ENCODE measurements at regions of chr10 and their contacts with region 1.

Region 1: DNA sequence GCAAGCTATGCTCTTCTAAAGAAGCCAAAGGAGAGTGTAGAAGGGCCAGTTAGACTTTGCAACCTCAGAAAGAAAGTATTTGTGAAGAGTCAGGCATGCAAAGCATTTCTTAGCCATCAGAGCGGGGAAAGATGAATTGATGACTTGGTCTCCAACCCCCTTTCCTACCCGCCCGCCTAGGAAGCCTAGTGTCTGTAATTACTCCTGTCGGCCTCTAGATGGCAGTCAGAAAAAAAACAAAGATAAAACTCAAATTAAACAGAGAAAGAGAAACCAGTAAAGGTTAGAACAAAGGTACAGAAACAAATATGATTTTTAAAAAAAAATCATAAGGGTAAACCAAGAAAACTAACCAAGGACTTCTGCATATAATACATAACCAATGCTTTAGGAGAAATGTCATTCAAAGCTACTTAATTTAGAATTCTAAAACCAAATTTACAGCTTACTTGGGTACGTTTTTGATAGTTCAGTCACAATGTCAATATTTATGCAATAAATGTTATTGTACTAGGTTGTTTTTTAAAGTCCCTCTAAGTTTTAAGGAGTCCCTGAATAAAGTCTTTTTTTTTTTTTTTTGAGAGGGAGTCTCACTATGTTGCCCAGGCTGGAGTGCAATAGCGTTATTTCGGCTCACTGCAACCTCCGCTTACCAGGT is 97.6 kb downstream of the LYZL1 start:
- DNase-seq: no peak
- H3K4me3 ChIP-seq: no peak overlapping the region
- H3K27ac ChIP-seq: no peak overlapping the region
- H3K4me1 ChIP-seq: 0 out of 7 replicates have a peak, but pooled peaks cover 0 to 3% (median 0%) of the 10 kb centered on the region in 4 experiments
- H3K27me3 ChIP-seq: no peaks in the 10 kb centered on the region
- CTCF ChIP-seq: peak; percentile 4 to 44 (median 43)
- EP300 ChIP-seq: no peak
- POLR2A ChIP-seq: no peak
- RAD21 ChIP-seq: peak in 1 of 2 experiments; percentile 14; a peak in 1 of 4 replicates

Region 2: DNA sequence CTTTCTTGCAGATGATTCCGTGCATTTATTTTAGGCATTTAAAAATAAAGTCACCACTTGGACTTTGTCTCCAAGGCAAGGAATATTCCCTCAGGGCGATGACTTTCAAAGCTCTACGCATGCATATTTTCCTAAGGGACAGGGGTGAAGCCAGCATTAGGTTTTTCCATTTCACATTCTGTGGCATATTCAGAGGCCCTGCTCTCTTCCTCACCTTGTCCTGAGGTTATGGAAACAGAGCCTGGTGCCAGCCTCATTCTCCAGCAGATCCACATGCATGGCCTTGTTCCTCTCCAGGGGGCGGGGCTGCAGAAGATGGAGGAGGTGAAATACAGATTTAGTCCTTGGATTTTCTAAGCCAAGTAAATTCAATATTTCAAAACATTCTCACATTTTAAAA is 109.2 kb before region 1 on chr10:
- CTCF ChIA-PET with region 1: no interaction called
- POLR2A ChIA-PET with region 1: no interaction called
- DNase-seq: no peak
- H3K4me3 ChIP-seq: no peak overlapping the region
- H3K27ac ChIP-seq: no peak overlapping the region
- H3K4me1 ChIP-seq: no peaks in the 10 kb centered on the region
- H3K27me3 ChIP-seq: no peaks in the 10 kb centered on the region
- CTCF ChIP-seq: no peak
- EP300 ChIP-seq: no peak
- POLR2A ChIP-seq: no peak
- RAD21 ChIP-seq: no peak

Region 3: GRCh38 chr10:29370097-29371092 is 16.1 kb before region 1 on chr10:
- CTCF ChIA-PET with region 1: interaction called, 52 read pairs
- POLR2A ChIA-PET with region 1: no interaction called
- DNase-seq: no peak
- H3K4me3 ChIP-seq: no peak overlapping the region
- H3K27ac ChIP-seq: no peak overlapping the region
- H3K4me1 ChIP-seq: no peaks in the 10 kb centered on the region
- H3K27me3 ChIP-seq: no peaks in the 10 kb centered on the region
- CTCF ChIP-seq: no peak
- EP300 ChIP-seq: no peak
- POLR2A ChIP-seq: no peak
- RAD21 ChIP-seq: no peak

Region 4: GRCh38 chr10:29409241-29410057 is 23.0 kb after region 1 on chr10:
- CTCF ChIA-PET with region 1: interaction called, 10 read pairs
- POLR2A ChIA-PET with region 1: no interaction called
- DNase-seq: no peak
- H3K4me3 ChIP-seq: no peak overlapping the region
- H3K27ac ChIP-seq: no peak overlapping the region
- H3K4me1 ChIP-seq: no peaks in the 10 kb centered on the region
- H3K27me3 ChIP-seq: no peaks in the 10 kb centered on the region
- CTCF ChIP-seq: no peak
- EP300 ChIP-seq: no peak
- POLR2A ChIP-seq: no peak
- RAD21 ChIP-seq: no peak